ENCODE measurements at regions of chr20 and their contacts with region 1.

Region 1: DNA sequence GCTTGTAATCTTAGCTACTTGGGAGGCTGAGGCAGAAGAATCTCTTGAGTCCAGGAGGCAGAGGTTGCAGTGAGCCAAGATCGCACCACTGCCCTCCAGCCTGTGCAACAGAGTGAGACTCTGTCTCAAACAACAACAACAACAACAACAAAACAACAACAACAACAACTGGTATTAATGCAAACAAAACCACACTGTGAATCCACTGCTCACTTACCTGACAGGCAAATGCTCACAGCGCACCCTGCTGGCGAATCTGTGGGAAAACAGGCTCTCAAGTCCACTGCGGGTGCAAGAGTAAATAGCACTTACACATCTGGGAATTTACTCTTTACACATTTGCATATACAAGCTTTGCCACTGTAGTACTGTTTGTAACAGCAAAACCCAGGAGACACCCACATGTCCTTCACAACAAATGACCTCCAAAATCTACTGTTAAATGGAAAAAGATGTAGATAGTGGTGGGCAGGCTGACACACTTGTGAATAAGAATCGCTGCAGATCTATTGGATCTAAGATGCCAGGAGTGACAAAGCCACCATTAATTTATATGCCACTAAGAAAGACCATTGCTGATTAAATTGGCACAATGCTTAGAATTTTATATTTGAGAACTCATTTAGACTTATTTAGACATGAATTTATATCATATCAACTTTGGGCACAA is 29.3 kb downstream of the NSFL1C start:
- DNase-seq: peak; percentile 69
- H3K4me3 Mint-ChIP-seq: no peak overlapping the region
- H3K27ac Mint-ChIP-seq: no peak overlapping the region
- H3K4me1 Mint-ChIP-seq: peaks cover 41% of the 10 kb centered on the region
- H3K27me3 Mint-ChIP-seq: peaks cover 4% of the 10 kb centered on the region

Region 2: DNA sequence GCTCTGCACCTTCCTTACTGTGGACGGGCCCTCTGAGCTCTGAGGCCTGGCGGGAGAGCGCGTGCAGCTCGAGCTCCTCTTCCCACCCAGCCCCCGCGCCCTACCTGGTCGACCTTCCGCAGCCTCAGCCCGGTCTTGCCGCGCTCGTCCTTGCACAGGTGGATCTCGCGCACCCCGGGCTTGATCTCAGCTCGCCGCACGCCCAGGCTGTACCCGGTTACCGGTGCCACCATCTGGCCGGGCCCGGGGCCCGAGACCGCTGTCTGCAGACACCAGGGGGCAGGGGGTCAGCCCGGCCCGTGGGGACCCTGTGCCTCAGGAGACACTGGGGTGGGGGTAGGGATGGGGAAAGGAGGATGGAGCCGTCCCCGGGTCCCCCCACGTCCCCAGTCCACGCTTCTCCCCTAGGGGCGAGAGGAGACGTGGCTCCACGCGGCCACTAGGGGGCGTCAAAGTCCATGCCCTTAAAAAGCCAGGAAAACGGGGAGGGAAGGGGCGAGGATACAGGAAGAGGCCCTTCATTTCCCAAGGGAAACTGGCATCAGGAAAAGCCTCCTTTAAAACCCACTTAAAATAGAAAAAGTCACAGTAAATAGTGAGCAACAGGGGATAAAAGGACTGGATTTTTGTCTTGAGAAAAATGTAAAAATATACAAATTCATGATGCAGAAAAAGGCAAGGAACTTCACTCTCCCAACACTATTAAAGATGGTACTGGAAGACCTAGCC is 124.0 kb before region 1 on chr20:
- intact Hi-C with region 1: loop called (anchors 1 kb)
- DNase-seq: peak; percentile 38
- H3K4me3 Mint-ChIP-seq: no peak overlapping the region
- H3K27ac Mint-ChIP-seq: no peak overlapping the region
- H3K4me1 Mint-ChIP-seq: peaks cover 14% of the 10 kb centered on the region
- H3K27me3 Mint-ChIP-seq: no peaks in the 10 kb centered on the region

Region 3: GRCh38 chr20:1381753-1382591 is 55.4 kb before region 1 on chr20:
- intact Hi-C with region 1: no loop called
- DNase-seq: no peak
- H3K4me3 Mint-ChIP-seq: no peak overlapping the region
- H3K27ac Mint-ChIP-seq: no peak overlapping the region
- H3K4me1 Mint-ChIP-seq: peaks cover 89% of the 10 kb centered on the region
- H3K27me3 Mint-ChIP-seq: no peaks in the 10 kb centered on the region

Region 4: DNA sequence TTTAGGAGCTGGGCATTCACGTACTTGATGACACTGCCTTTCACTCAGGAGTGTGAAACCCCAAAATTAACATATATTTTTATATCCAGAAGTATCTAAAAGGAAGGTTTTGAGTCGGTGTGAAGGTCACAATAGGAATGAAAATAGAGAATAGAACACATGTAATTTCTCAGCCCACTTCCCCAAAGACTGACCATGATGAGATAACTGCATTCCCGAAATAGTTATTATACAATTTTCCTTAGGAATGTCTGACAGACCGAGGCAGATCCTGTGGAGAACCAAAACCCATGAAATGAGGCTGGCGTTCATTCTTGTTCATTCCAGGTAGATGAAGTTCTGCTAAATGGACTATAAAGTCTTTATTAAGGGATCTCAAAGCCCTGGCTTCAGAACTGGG is 18.9 kb after region 1 on chr20:
- intact Hi-C with region 1: no loop called
- DNase-seq: no peak
- H3K4me3 Mint-ChIP-seq: no peak overlapping the region
- H3K27ac Mint-ChIP-seq: no peak overlapping the region
- H3K4me1 Mint-ChIP-seq: no peaks in the 10 kb centered on the region
- H3K27me3 Mint-ChIP-seq: no peaks in the 10 kb centered on the region

Region 5: DNA sequence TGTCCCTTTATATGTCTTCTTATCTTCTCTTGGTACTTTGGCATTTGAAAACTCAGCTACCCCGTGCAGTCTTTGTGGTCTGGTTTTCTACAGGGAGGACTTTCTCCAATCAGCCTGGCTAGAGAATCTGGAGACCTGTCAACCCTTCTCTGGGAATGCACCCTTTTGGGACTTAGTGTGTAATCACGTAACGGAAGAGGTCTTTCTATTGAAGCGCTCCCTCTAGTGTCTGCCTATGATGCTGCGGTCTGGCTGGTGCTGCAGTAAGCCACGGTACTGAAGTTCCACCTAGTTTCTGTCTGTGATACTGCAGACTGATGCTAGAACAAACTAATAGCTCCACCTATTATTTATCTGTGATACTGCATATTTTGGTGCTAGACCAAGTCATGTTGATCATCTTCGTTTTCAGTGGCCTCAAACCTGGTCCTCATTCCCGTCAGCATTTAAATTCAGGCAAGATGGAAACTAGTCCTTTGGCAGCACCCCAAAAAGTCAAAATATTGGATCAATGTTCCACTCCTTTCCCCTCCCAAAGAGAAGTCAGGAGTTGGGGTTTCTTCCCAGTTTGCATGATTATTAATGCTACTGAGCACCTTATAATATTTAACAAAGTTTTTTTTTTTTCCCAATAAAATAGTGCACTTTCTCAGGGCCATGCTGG is 66.3 kb after region 1 on chr20:
- intact Hi-C with region 1: no loop called
- DNase-seq: peak; percentile 68
- H3K4me3 Mint-ChIP-seq: no peak overlapping the region
- H3K27ac Mint-ChIP-seq: no peak overlapping the region
- H3K4me1 Mint-ChIP-seq: peaks cover 6% of the 10 kb centered on the region
- H3K27me3 Mint-ChIP-seq: peaks cover 49% of the 10 kb centered on the region